Left cardiac atrium (tissue), 4 donors: ENCODE measurements at regions of chr3 and their contacts with region 1.

Region 1: DNA sequence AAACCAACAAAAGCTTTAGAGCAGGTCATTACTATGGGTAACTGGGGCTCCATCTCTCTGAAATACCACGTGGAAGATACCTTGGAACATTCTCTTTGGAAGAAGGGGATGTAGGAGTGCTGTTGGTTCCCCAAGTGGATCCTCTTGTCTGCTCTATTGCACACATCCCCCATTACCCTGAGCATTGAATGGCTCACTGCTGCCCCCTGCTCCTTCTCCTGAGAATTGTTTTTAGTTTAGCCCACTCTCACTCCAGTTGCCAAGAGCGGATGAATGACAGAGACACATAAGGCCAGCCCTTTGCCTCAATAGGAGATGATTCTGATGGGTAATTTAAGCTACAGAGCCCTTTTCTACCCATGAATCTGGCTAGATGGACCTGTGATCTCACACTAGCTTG is 135.6 kb upstream of the SUCLG2 start:
- DNase-seq: peak; percentile 28
- ATAC-seq: peak; percentile 57 to 59

Region 2: GRCh38 chr3:67384760-67385397 is 405.2 kb before region 1 on chr3:
- intact Hi-C with region 1: loop called in 1 of 2 experiments (anchors 5 kb)
- DNase-seq: peak; percentile 22
- ATAC-seq: peak; percentile 54 to 72